ENCODE measurements at regions of chr1 and their contacts with region 1.

Region 1: GRCh38 chr1:207579436-207579799 is 65.5 kb upstream of the CR1L start:
- DNase-seq: peak; percentile 64 to 71
- H3K4me3 ChIP-seq: no peak overlapping the region
- H3K4me3 Mint-ChIP-seq: no peak overlapping the region
- H3K27ac Mint-ChIP-seq: no peak overlapping the region
- H3K4me1 ChIP-seq: no peaks in the 10 kb centered on the region
- H3K4me1 Mint-ChIP-seq: no peaks in the 10 kb centered on the region
- H3K27me3 ChIP-seq: no peaks in the 10 kb centered on the region; the same call in 1 of the 2 replicates
- H3K27me3 Mint-ChIP-seq: peaks cover 12% of the 10 kb centered on the region
- CTCF ChIP-seq: peak; percentile 67 to 73

Region 2: GRCh38 chr1:207499573-207499972 is 79.8 kb before region 1 on chr1:
- CTCF ChIA-PET with region 1: no interaction called
- POLR2A ChIA-PET with region 1: no interaction called
- intact Hi-C with region 1: no loop called
- DNase-seq: peak; percentile 56 to 57
- H3K4me3 ChIP-seq: no peak overlapping the region
- H3K4me3 Mint-ChIP-seq: no peak overlapping the region
- H3K27ac Mint-ChIP-seq: no peak overlapping the region
- H3K4me1 ChIP-seq: no peaks in the 10 kb centered on the region
- H3K4me1 Mint-ChIP-seq: no peaks in the 10 kb centered on the region
- H3K27me3 ChIP-seq: no peaks in the 10 kb centered on the region; the same call in 1 of the 2 replicates
- H3K27me3 Mint-ChIP-seq: peaks cover 26% of the 10 kb centered on the region
- CTCF ChIP-seq: peak; percentile 69 to 70

Region 3: DNA sequence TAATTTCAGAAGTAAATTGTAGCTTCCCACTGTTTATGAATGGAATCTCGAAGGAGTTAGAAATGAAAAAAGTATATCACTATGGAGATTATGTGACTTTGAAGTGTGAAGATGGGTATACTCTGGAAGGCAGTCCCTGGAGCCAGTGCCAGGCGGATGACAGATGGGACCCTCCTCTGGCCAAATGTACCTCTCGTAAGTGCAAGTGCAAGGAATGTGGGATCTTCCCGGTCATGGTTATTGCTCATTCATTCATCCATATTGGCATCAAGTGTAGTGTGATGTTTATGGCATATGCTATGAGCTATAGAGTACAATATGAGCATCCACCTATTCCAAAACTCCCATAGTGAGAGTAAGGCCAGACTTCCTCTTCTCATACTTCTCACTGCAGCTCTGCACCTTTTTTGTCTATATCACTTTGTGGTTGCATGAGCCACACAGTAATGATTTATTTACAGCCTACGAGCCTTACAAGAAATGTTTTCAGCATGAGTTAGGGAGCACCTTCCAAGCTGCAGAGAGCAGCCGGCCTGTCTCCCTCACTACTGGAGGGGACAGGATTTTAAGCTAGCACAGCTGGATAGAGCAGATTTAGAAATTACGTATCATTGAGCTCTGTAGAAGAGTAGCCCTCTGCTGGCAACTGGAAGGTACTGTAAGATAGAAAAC is 40.6 kb after region 1 on chr1:
- CTCF ChIA-PET with region 1: interaction called, 13 read pairs
- POLR2A ChIA-PET with region 1: no interaction called
- intact Hi-C with region 1: no loop called
- DNase-seq: peak in 1 of 2 experiments; percentile 36
- H3K4me3 ChIP-seq: no peak overlapping the region
- H3K4me3 Mint-ChIP-seq: no peak overlapping the region
- H3K27ac Mint-ChIP-seq: no peak overlapping the region
- H3K4me1 ChIP-seq: no peaks in the 10 kb centered on the region
- H3K4me1 Mint-ChIP-seq: no peaks in the 10 kb centered on the region
- H3K27me3 ChIP-seq: no peaks in the 10 kb centered on the region
- H3K27me3 Mint-ChIP-seq: peaks cover 8% of the 10 kb centered on the region
- CTCF ChIP-seq: peak; percentile 69 to 83

Region 4: DNA sequence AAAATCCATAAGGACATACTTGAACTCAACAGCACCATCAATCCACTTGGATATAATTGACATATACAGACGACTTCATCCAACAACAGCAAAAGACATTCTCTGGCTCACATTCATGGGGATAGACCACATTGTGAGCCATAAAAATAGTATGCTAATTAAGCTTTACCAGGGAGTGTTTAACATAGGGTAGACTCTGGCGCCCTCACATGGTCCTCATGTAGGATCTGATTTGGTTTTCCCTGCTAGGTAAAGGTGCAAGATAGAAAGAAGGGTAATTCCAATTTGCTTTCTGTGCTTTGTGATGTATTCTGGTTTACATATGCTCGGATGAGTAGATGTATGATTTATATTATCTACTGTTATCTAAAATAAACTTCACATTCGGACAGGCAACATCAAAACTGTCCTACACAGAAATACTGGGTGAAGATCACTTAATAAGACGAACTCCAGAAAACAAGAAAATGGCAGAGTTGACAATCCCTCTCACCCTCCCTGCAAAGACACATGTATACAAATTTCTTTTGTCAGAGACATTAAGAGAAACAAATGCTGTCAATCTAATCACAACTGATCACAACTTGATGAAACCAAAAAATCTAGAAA is 93.2 kb after region 1 on chr1:
- CTCF ChIA-PET with region 1: interaction called, 14 read pairs
- POLR2A ChIA-PET with region 1: no interaction called
- intact Hi-C with region 1: no loop called
- DNase-seq: peak in 1 of 2 experiments; percentile 43
- H3K4me3 ChIP-seq: no peak overlapping the region
- H3K4me3 Mint-ChIP-seq: no peak overlapping the region
- H3K27ac Mint-ChIP-seq: no peak overlapping the region
- H3K4me1 ChIP-seq: no peaks in the 10 kb centered on the region
- H3K4me1 Mint-ChIP-seq: no peaks in the 10 kb centered on the region
- H3K27me3 ChIP-seq: no peaks in the 10 kb centered on the region
- H3K27me3 Mint-ChIP-seq: no peaks in the 10 kb centered on the region
- CTCF ChIP-seq: peak; percentile 43 to 62

Region 5: DNA sequence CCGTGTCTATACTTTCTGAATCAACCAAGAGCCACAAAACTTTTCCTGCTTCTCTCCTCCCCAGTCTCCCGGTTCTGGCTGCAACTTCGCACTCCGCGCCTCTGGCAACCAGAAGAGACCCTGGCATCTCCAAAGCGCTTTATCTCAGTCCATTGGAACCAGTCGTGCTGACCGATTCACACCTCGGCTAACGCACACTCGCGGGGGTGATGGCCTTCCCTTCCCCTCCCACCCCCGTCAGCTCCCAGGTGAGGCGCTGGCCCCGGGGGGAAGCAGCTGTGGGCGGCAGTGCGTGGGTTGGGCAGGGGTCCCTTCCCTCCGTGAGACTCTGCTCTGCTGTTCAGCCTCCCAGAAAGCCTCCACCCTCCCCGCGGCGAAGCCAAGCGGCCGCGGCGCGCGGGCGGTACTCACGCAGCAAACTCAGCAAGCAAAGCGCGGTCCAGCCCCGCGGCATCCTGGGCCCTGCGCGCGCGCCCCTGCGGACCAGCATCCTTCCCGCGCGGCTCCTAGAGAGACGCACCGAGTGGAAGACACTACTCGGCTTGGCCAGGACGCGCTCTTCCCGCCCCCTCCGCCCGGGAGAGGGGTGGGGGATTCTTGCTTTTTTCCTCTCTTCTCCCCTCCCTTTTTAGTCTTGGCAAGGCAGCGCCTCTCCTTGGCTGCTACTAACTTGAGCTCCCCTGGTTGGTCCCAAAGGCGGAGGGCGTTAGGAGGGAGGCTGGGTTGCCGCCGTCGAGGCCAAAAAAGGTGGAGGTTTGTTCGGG is 331.4 kb after region 1 on chr1 and contains the start of gene CD34:
- CTCF ChIA-PET with region 1: no interaction called
- POLR2A ChIA-PET with region 1: no interaction called
- intact Hi-C with region 1: no loop called
- DNase-seq: no peak
- H3K4me3 ChIP-seq: peak within 1 kb of the TSS; percentile 25
- H3K4me3 Mint-ChIP-seq: peak within 1 kb of the TSS; percentile 63
- H3K27ac Mint-ChIP-seq: no peak within 1 kb of the TSS
- H3K4me1 ChIP-seq: no peaks in the 10 kb centered on the region
- H3K4me1 Mint-ChIP-seq: peaks cover 8% of the 10 kb centered on the region
- H3K27me3 ChIP-seq: no peaks in the 10 kb centered on the region; the same call in 1 of the 2 replicates
- H3K27me3 Mint-ChIP-seq: peaks cover 4% of the 10 kb centered on the region
- CTCF ChIP-seq: no peak
- total RNA-seq, gene CD34: not detected in 2 replicates